Tibial artery (tissue), 4 donors: ENCODE measurements at regions of chr22 and their contacts with region 1.

Region 1: GRCh38 chr22:21867528-21868266 is at the start of gene MAPK1:
- DNase-seq: peak; percentile 89 to 95
- H3K4me3 ChIP-seq: peak within 1 kb of the TSS; percentile 85
- H3K27ac ChIP-seq: peak within 1 kb of the TSS; percentile 79 to 86
- H3K4me1 ChIP-seq: peaks cover 0 to 39% (median 24%) of the 10 kb centered on the region in 4 donors
- H3K27me3 ChIP-seq: no peaks in the 10 kb centered on the region
- CTCF ChIP-seq: peak; percentile 40 to 49

Region 2: GRCh38 chr22:21735200-21736076 is 132.3 kb before region 1 on chr22 and contains the start of gene YPEL1:
- intact Hi-C with region 1: loop called (anchors 5 kb)
- DNase-seq: peak; percentile 95 to 98
- H3K4me3 ChIP-seq: peak within 1 kb of the TSS; percentile 64 to 78
- H3K27ac ChIP-seq: peak within 1 kb of the TSS; percentile 72 to 78
- H3K4me1 ChIP-seq: peaks cover 0 to 16% (median 13%) of the 10 kb centered on the region in 4 donors
- H3K27me3 ChIP-seq: no peaks in the 10 kb centered on the region
- CTCF ChIP-seq: no peak

Region 3: GRCh38 chr22:21816787-21817496 is 50.8 kb before region 1 on chr22:
- intact Hi-C with region 1: loop called (anchors 10 kb)
- DNase-seq: no peak
- H3K4me3 ChIP-seq: no peak overlapping the region
- H3K27ac ChIP-seq: peak overlapping the region; percentile 36 to 57
- H3K4me1 ChIP-seq: peaks cover 0 to 58% (median 14%) of the 10 kb centered on the region in 4 donors
- H3K27me3 ChIP-seq: no peaks in the 10 kb centered on the region
- CTCF ChIP-seq: no peak

Region 4: DNA sequence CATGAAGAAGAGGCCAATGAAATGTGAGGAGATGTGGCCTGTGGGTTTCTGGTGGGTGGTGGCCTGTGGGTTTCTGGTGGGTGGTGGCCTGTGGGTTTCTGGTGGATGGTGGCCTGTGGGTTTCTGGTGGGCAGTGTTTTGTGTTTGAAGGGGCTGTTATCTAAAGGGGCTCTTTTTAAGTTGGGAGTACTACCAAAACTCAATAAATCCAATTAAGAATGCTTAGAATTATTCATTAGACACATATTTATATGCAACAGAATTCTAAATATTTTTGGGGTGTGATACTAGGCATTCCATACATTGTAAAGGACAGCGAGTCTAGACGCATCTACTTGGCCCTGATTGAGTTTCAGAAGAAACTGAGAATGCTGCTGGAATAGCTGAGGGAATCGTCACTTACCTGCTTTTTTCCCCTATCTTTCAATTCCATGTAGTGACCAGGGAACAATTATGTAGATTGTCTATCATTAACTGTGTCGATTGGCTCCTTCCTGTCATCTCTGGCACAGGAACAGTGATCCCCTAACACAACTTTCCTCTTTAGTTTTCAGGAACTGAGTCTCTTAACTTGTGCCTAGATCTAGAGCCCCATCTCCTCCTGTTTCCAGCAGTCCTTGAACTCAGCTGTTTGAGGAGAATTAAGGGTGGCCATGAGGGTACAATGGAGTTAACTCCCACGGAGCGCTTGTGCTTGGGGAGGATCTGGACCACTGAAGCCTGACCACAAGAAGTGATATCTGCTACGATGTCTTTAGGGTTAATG is 152.1 kb after region 1 on chr22:
- intact Hi-C with region 1: no loop called
- DNase-seq: no peak
- H3K4me3 ChIP-seq: no peak overlapping the region
- H3K27ac ChIP-seq: no peak overlapping the region
- H3K4me1 ChIP-seq: no peaks in the 10 kb centered on the region
- H3K27me3 ChIP-seq: peaks cover 0 to 5% of the 10 kb centered on the region in 2 donors
- CTCF ChIP-seq: no peak